ENCODE measurements at regions of chr1 and their contacts with region 1.

Region 1: GRCh38 chr1:67489643-67490042 is 59.4 kb upstream of the SERBP1 start:
- DNase-seq: no peak
- ATAC-seq: peak in 3 of 4 donors; percentile 81 to 87 (median 84)
- H3K4me3 ChIP-seq: no peak overlapping the region
- H3K27ac ChIP-seq: no peak overlapping the region
- H3K4me1 ChIP-seq: peaks cover 0 to 3% (median 0%) of the 10 kb centered on the region in 12 donors
- H3K27me3 ChIP-seq: no peaks in the 10 kb centered on the region
- CTCF ChIP-seq: peak in 10 of 12 donors; percentile 32 to 60 (median 47)
- POLR2A ChIP-seq: no peak

Region 2: GRCh38 chr1:67214420-67215174 is 275.0 kb before region 1 on chr1:
- intact Hi-C with region 1: loop called in 1 of 10 experiments (anchors 5 kb)
- DNase-seq: no peak
- ATAC-seq: no peak
- H3K4me3 ChIP-seq: no peak overlapping the region
- H3K27ac ChIP-seq: no peak overlapping the region
- H3K4me1 ChIP-seq: peaks cover 0 to 4% (median 0%) of the 10 kb centered on the region in 12 donors
- H3K27me3 ChIP-seq: no peaks in the 10 kb centered on the region
- CTCF ChIP-seq: peak; percentile 16 to 55 (median 36)
- POLR2A ChIP-seq: no peak

Region 3: DNA sequence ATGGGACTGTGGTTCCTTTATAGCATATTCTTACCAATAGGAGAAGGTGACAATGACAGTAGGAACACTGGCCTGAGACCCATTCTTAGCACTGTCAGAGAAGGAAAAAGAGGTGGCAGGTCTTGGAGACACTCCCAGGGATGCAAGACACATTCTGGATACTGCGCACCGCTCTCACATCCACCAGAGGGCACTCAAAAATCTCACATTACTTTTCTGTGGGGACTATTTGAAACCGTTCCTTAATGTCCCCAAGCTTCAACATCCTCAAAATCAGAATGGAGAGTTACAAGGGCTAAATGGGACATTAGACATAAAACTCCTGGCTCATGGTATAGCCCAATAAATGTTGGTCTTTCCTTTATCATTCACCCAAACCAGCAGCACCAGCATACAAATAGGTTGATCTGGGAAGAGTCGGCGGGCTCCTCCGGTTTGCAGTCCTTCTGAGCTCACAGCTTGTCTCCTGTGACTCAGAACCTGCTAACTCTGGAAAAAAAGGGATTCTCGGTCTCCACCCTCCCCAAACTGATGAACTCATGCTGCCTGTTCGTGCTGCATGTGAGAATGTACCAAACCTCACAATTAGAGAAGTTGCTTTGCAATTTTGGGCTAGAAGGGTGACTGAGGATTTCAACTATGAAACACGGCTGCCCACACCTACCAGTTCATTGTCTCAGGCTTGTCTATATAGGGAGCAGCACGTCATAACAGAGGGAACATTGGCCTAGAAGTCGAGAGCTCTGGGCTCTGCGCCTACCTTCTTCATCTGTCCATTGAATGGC is 141.8 kb before region 1 on chr1:
- intact Hi-C with region 1: loop called in 8 of 10 experiments (anchors 1 to 5 kb)
- DNase-seq: peak in 3 of 5 donors; percentile 13 to 33 (median 25)
- ATAC-seq: peak; percentile 67 to 86 (median 76)
- H3K4me3 ChIP-seq: no peak overlapping the region
- H3K27ac ChIP-seq: no peak overlapping the region
- H3K4me1 ChIP-seq: no peaks in the 10 kb centered on the region
- H3K27me3 ChIP-seq: peaks cover 0 to 3% (median 0%) of the 10 kb centered on the region in 9 donors
- CTCF ChIP-seq: peak; percentile 56 to 81 (median 73)
- POLR2A ChIP-seq: no peak